Thyroid gland (tissue), 4 donors: ENCODE measurements at regions of chr14 and their contacts with region 1.

Region 1: GRCh38 chr14:100192672-100193416 is 33.4 kb upstream of the DEGS2 start:
- DNase-seq: peak; percentile 100
- H3K4me3 ChIP-seq: peak overlapping the region in 1 of 3 donors; percentile 18
- H3K27ac ChIP-seq: peak overlapping the region; percentile 92 to 96 (median 93)
- H3K4me1 ChIP-seq: peaks cover 15 to 17% of the 10 kb centered on the region in 2 donors
- H3K27me3 ChIP-seq: no peaks in the 10 kb centered on the region
- CTCF ChIP-seq: peak; percentile 61 to 96 (median 83)
- POLR2A ChIP-seq: peak in 1 of 2 donors; percentile 62

Region 2: DNA sequence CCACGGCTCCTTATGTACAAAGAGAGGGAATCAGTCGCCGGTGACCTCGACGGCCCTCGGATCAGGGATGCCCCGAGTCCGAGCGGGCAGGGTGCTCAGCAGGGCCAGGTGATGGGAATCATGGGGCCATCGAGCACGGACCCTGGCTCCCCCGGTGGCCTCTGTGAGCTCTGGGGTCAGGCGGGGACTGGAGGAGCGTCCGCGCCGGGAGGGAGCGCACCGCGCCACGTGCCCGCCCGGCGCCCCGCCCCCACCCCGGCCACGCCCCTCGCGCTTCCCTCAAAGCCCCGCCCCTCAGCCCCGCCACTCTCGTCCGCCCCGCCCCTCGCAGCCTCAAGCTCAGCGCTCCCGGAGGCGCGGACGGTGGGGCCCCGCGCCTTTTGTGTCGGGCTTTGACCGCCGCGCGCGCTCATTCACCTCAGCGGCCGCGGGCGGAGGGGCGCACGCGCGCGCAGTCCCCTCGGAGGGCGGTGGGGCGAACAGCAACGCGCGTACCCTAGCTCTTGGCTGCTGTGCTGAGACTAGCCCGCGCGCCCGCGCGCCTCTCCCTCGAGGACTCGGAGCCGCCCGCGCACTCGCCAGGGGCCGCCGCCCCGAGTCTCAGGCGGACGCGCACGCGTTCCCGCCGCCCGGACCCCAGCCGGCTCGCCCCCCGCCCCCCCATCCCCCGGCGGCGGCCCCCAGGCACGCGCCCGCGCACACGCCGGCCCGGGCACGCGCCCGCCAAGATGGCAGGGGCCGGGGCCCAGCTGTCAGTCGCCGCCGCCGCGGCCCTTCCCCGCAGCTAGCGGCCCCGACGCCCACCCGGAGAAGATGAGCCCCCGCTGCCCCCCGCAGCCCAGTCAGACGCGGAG is 221.5 kb before region 1 on chr14:
- intact Hi-C with region 1: loop called (anchors 5 kb)
- DNase-seq: peak; percentile 73 to 80
- H3K4me3 ChIP-seq: peak overlapping the region in 2 of 3 donors; percentile 77 to 81
- H3K27ac ChIP-seq: peak overlapping the region in 1 of 3 donors; percentile 49
- H3K4me1 ChIP-seq: peaks cover 0 to 3% of the 10 kb centered on the region in 2 donors
- H3K27me3 ChIP-seq: no peaks in the 10 kb centered on the region
- CTCF ChIP-seq: no peak
- POLR2A ChIP-seq: peak in 1 of 2 donors; percentile 67

Region 3: GRCh38 chr14:100078991-100079725 is 113.7 kb before region 1 on chr14:
- intact Hi-C with region 1: loop called (anchors 10 kb)
- DNase-seq: no peak
- H3K4me3 ChIP-seq: no peak overlapping the region
- H3K27ac ChIP-seq: peak overlapping the region in 1 of 3 donors; percentile 23
- H3K4me1 ChIP-seq: peaks cover 0 to 17% of the 10 kb centered on the region in 2 donors
- H3K27me3 ChIP-seq: no peaks in the 10 kb centered on the region
- CTCF ChIP-seq: no peak
- POLR2A ChIP-seq: no peak

Region 4: GRCh38 chr14:100108042-100108825 is 84.6 kb before region 1 on chr14:
- intact Hi-C with region 1: no loop called
- DNase-seq: peak; percentile 78 to 84
- H3K4me3 ChIP-seq: no peak overlapping the region
- H3K27ac ChIP-seq: peak overlapping the region in 1 of 3 donors; percentile 46
- H3K4me1 ChIP-seq: peaks cover 10 to 37% of the 10 kb centered on the region in 2 donors
- H3K27me3 ChIP-seq: no peaks in the 10 kb centered on the region
- CTCF ChIP-seq: peak; percentile 59 to 90 (median 78)
- POLR2A ChIP-seq: no peak

Region 5: DNA sequence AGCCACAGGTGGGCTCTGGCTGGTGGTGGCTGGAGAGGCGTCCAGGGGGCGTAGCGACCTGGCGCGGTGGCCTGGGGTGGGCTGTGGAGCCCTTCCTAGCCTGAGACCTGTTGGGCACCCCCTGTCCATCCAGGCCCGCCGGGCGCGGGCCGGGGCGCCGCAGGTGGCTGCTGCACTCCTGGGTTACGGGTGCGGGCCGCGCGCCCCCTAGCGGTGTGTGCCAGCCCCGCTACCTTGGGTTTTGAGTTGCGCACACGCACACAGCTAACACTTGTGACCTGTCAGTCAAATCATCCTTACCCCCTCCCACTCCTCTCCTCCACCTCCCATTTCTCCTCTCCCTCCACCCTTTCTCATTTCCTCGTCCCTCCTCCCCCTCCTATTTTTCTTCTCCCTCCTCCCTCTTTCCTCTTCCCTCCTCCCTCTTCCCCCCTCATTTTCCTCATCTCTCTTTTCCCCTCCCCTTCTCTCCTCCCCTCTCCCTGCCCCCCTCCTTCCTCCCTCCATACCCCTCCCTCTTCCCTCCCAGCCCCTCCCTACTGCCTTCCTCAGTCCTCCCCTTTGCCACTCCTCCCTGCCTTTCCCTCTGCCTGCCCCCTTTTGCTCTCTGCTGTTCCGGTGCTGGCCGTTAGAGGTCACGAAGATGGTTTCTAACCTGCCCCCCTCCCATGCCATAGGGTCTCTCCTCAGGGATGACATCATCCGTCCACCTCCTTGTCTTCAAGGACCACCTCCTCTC is 635.4 kb after region 1 on chr14:
- intact Hi-C with region 1: no loop called
- DNase-seq: no peak
- H3K4me3 ChIP-seq: no peak overlapping the region
- H3K27ac ChIP-seq: no peak overlapping the region
- H3K4me1 ChIP-seq: no peaks in the 10 kb centered on the region
- H3K27me3 ChIP-seq: peaks cover 3% of the 10 kb centered on the region
- CTCF ChIP-seq: peak in 2 of 6 experiments; percentile 18 to 21
- POLR2A ChIP-seq: no peak